GM10248 (cell line): ENCODE measurements at regions of chr11 and their contacts with region 1.

Region 1: DNA sequence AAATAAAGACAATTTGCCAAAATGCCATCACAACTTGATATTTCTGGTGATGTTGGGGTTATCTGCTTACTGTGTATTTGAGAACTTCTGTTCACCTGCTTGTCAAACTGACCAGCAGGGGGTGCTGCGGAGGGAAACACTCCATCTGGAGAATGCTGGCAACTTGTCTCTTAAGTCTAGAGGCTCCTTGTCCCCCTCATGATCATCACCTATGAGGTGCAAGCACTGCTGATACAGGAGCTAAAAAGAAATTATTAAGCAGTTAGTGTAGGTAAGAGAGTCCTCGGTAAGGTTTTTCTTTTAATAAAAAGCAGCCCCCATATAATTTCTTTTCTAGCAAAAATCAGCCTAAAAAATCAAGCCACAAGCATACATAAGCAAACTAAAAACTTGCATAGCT is 32.7 kb upstream of the GLYATL1B start:
- DNase-seq: no peak
- CTCF ChIP-seq: peak; percentile 70

Region 2: DNA sequence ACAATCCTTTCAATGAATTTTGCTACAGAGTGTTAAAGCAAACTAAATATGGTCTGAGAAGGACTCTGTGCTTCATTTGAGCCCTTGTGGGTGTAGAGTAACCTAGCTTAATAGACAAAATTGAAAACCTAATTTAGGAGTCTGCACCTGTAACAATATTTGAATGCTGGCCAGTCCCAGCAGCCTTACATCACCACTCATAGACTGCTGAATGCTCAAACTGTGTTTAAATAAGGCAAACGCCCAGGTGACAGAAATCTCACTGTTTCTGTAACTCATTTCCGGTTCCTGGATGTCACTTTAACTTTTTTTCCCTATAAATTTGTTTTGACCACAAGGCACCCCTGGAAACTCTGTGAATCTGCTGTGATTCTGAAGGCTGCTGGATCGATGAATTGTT is 12.8 kb before region 1 on chr11:
- CTCF ChIA-PET with region 1: interaction called, 11 read pairs
- POLR2A ChIA-PET with region 1: no interaction called
- DNase-seq: no peak
- CTCF ChIP-seq: no peak

Region 3: DNA sequence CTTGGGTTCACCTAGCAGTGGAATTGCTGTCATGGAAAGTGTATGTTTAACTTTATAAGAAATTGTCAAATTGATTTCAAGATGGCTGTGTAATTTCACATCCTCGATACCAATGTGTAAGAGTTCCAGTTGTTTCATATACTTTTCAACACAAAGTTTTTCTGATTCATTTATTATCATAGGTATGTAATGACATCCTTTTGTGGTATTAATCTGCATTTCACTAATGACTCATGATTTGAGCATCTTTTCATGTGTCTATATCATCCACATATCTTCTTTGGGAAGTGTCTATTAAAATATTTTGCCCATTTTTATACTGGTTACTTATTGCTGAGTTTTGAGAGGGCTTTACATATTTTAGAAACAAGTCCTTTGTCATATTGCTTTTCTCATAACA is 15.7 kb after region 1 on chr11:
- CTCF ChIA-PET with region 1: interaction called, 21 read pairs
- POLR2A ChIA-PET with region 1: no interaction called
- DNase-seq: no peak
- CTCF ChIP-seq: no peak

Region 4: GRCh38 chr11:59076876-59077571 is 23.6 kb after region 1 on chr11:
- CTCF ChIA-PET with region 1: interaction called, 14 read pairs
- POLR2A ChIA-PET with region 1: no interaction called
- DNase-seq: peak; percentile 59
- CTCF ChIP-seq: no peak

Region 5: GRCh38 chr11:59106363-59107336 is 53.3 kb after region 1 on chr11 and contains the start of gene FAM111B:
- CTCF ChIA-PET with region 1: interaction called, 23 read pairs
- POLR2A ChIA-PET with region 1: no interaction called
- DNase-seq: peak; percentile 83
- CTCF ChIP-seq: peak; percentile 13

Region 6: DNA sequence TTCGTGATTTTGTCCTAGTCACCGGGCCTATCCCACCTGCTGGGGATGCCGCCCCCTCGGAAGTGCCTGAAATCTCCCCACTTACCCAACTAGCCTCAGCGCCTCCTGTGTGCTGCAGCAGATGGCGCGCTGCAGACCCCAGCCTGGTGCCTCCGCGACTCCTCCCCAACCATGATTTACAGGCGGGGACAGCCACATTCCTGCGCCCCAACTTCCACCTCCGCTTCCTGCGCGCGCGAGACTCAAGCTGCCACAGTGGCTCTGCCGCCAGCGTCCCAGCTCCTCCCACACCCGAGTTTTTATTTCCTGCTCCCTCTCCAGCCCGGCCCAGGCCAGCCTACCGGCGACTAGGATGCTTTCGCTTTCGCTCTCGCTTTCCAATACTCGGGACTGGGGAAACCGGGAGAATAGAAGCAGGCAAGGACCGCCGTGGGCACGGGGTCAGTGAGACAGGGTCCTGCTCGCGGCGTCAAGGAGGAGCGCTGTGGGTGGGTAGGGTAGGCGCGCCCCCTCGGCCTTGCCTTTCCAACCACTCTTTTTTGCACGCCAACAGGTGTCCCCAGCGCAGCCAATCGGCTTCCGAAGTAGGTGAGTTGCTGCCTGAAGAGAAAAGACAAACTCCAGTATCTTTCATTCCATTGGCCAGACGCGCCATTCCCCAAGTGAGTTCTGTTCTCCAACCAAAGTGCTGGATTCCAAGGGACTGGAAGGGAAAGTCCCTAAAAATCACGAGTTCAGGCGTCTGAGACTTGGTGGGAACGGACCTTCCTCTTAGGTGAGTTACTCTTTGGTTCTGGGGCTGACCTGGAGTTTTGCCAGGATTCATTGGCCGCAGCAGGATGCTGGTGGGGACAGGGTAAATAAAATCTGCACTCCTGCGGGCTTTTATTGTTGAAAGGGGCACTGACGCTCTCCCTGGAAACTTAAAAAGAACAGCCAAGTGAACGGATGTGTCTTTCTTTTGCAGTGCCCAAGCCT is 89.4 kb after region 1 on chr11 and contains the start of gene FAM111A:
- CTCF ChIA-PET with region 1: interaction called, 12 read pairs
- POLR2A ChIA-PET with region 1: no interaction called
- DNase-seq: peak; percentile 82
- CTCF ChIP-seq: peak; percentile 70